ENCODE measurements at regions of chr3 and their contacts with region 1.

Region 1: GRCh38 chr3:141237701-141238521 is 6.3 kb downstream of the PXYLP1 start:
- DNase-seq: peak; percentile 56
- H3K4me3 Mint-ChIP-seq: peak overlapping the region; percentile 53
- H3K27ac Mint-ChIP-seq: peak overlapping the region; percentile 78
- H3K4me1 Mint-ChIP-seq: peaks cover 69% of the 10 kb centered on the region
- H3K27me3 Mint-ChIP-seq: no peaks in the 10 kb centered on the region

Region 2: DNA sequence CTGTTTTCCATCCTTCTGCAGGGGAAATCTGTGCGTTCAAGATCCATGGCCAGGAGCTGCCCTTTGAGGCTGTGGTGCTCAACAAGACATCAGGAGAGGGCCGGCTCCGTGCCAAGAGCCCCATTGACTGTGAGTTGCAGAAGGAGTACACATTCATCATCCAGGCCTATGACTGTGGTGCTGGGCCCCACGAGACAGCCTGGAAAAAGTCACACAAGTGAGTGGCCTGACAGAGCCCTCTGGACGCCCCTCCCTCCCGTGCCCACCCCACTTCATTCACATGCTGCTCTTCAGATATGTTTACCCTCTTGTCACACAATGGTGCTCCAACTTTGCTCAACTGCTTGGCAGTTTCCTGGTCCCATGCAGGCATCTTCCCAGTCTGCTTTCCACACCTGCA is 834.3 kb before region 1 on chr3:
- CTCF ChIA-PET with region 1: no interaction called
- intact Hi-C with region 1: no loop called
- DNase-seq: no peak
- H3K4me3 Mint-ChIP-seq: no peak overlapping the region
- H3K27ac Mint-ChIP-seq: no peak overlapping the region
- H3K4me1 Mint-ChIP-seq: no peaks in the 10 kb centered on the region
- H3K27me3 Mint-ChIP-seq: peaks cover 2% of the 10 kb centered on the region

Region 3: DNA sequence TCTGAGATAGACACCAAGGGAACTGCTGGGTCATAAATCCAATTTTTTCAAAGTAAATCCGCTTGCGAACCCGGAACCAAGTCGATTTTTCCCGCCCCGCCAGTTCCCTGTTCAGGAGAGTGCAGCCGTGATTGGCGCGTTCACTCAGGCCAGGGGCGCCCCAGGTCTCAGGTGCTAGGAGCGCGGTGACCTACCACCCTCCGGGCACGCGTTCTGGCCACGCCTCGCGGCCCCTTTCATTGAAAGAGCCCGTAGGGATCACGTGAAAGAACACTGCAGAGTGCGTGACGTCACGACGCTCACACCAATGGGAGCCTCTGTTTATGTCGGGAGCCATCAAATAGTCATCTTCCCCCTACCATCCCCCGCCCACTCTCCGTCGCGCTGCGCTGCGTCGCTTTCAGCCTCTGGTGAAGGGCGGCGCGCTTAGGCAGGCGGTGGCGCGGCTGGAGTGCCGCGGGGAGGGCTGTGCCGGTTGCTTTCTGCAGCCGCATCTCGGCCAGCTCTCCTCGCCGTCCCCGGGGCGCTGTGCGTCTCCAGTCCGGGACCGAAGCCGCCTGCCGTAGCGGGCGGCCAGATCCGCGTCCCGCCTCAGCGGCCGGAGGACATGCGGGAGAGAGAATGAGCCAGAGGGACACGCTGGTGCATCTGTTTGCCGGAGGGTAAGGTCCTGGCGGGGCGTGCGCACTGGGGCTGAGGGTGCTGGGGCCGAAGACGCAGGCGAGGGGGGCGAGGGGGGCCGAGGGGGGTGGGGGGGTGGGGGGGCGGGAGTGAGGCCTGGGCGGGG is 296.3 kb before region 1 on chr3 and contains the start of gene SLC25A36:
- CTCF ChIA-PET with region 1: interaction called, 3 read pairs
- intact Hi-C with region 1: loop called (anchors 1 kb)
- DNase-seq: peak; percentile 99
- H3K4me3 Mint-ChIP-seq: peak within 1 kb of the TSS; percentile 89
- H3K27ac Mint-ChIP-seq: peak within 1 kb of the TSS; percentile 88
- H3K4me1 Mint-ChIP-seq: peaks cover 35% of the 10 kb centered on the region
- H3K27me3 Mint-ChIP-seq: no peaks in the 10 kb centered on the region
- total RNA-seq, gene SLC25A36: 48.7 to 50.1 TPM

Region 4: GRCh38 chr3:141255846-141256261 is 17.9 kb after region 1 on chr3:
- CTCF ChIA-PET with region 1: interaction called, 62 read pairs
- intact Hi-C with region 1: loop called (anchors 1 kb)
- DNase-seq: peak; percentile 68
- H3K4me3 Mint-ChIP-seq: peak overlapping the region; percentile 3
- H3K27ac Mint-ChIP-seq: no peak overlapping the region
- H3K4me1 Mint-ChIP-seq: peaks cover 25% of the 10 kb centered on the region
- H3K27me3 Mint-ChIP-seq: no peaks in the 10 kb centered on the region

Region 5: DNA sequence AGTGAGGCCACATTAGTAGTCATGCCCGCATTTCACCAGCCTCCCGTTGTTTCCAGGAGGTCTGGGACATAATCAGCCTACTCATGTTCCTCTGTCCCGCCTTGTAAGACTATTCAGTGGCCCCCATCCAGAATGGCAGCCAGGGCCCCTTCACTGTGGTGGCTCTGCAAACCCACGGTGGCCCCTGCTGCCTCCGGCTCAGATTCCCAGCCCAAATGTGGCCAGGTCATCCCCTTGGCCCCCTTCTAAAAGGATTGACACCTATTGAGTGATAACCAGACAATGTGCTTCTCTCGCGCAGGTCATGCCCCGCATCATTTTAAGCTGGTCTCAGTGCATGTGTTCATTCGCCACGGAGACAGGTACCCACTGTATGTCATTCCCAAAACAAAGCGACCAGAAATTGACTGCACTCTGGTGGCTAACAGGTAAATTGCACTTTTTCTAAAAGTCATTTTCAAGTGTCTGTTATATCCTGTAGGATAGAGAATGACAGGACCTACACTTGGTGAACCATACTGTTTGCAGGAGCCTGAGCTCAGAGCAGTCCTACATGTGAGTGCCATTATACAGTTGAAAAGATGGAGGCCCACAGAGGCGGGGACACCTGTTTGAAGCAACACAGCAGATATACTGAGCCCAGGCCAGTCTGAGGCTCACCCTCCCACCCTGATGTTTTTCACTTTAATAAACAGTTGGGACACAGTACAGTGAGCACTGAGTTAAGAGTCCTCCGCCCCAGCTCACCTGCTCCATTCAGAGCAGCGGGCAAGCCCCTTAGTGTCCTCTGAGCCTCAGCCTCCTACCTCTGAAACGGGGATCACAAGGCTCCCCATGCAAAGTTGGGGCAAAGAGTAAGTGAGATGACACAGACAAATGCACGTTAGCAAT is 41.4 kb after region 1 on chr3:
- CTCF ChIA-PET with region 1: interaction called, 35 read pairs
- intact Hi-C with region 1: loop called (anchors 1 kb)
- DNase-seq: peak; percentile 34
- H3K4me3 Mint-ChIP-seq: no peak overlapping the region
- H3K27ac Mint-ChIP-seq: no peak overlapping the region
- H3K4me1 Mint-ChIP-seq: peaks cover 17% of the 10 kb centered on the region
- H3K27me3 Mint-ChIP-seq: no peaks in the 10 kb centered on the region

Measured in activated naive CD4-positive, alpha-beta T cell treated with anti-CD3 and anti-CD28 coated beads for 36 hours (primary cell).